ENCODE measurements at regions of chr15 and their contacts with region 1.

Region 1: DNA sequence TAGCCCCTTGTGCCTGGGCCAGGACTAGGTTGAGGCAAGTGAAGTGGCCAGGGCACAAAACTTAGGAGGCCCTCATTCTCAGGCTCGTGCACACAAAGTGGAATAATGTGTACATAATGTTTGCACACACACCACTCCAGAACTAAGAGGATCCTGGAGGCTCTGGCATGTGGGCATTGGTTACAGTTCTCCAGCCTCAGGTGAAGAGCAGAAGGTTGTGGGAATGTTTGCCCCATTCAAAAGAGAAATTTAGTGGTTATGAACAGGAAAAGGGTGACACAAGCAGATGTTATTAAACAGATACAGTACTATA is 31.3 kb downstream of the ASB7 start:
- DNase-seq: no peak
- H3K4me3 ChIP-seq: no peak overlapping the region
- H3K27ac ChIP-seq: no peak overlapping the region
- H3K4me1 ChIP-seq: peaks cover 0 to 16% (median 0%) of the 10 kb centered on the region in 4 donors
- H3K27me3 ChIP-seq: no peaks in the 10 kb centered on the region
- CTCF ChIP-seq: no peak

Region 2: GRCh38 chr15:100650685-100651084 is 17.0 kb after region 1 on chr15:
- intact Hi-C with region 1: no loop called
- DNase-seq: no peak
- H3K4me3 ChIP-seq: no peak overlapping the region
- H3K27ac ChIP-seq: no peak overlapping the region
- H3K4me1 ChIP-seq: no peaks in the 10 kb centered on the region
- H3K27me3 ChIP-seq: no peaks in the 10 kb centered on the region
- CTCF ChIP-seq: no peak

Region 3: DNA sequence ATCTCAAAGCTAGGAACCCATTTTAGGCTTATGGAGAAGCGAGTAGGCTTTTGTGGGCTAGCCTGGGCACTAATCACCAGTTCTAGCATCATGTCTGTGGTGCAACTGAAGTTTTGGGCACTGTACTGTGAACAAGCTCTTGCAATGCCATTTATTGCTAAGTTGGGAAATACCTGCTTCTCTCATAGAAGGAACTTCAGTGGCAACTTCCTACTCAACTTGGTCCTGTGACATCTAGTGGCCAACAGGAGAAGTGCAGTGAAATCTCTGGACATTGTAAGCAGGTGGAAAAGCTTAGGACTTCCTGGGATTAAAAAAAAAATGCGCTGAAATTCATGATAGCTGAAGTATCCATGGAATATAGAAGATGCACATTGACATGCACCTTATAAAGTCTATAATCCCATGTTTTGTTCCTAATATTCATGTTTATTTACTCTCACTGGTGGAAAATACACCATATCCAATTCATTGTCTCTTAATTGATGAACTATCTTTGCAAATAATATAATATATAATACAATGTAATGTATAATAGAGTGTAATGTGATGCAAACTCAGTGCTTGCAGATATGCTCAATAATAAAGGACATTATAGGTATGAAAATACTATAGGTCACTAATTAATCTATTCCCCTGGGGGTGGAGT is 239.4 kb after region 1 on chr15:
- intact Hi-C with region 1: loop called (anchors 5 kb)
- DNase-seq: peak in 1 of 2 donors; percentile 84
- H3K4me3 ChIP-seq: no peak overlapping the region
- H3K27ac ChIP-seq: no peak overlapping the region
- H3K4me1 ChIP-seq: no peaks in the 10 kb centered on the region
- H3K27me3 ChIP-seq: peaks cover 0 to 4% of the 10 kb centered on the region in 2 donors
- CTCF ChIP-seq: peak; percentile 89 to 93

Measured in tibial artery (tissue), 4 donors.